Sigmoid colon (tissue), 7 donors: ENCODE measurements at regions of chr3 and their contacts with region 1.

Region 1: GRCh38 chr3:52278510-52279069 is at the start of gene WDR82:
- DNase-seq: peak; percentile 99
- H3K4me3 ChIP-seq: peak within 1 kb of the TSS; percentile 61 to 89 (median 83)
- H3K27ac ChIP-seq: peak within 1 kb of the TSS; percentile 94 to 99 (median 96)
- H3K4me1 ChIP-seq: peaks cover 0 to 53% (median 51%) of the 10 kb centered on the region in 4 donors
- H3K27me3 ChIP-seq: no peaks in the 10 kb centered on the region
- CTCF ChIP-seq: peak in 3 of 4 experiments; percentile 26 to 51 (median 29)
- EP300 ChIP-seq: peak in 1 of 4 donors; percentile 44
- POLR2A ChIP-seq: peak; percentile 53 to 63
- total RNA-seq, gene WDR82: 44.4 to 54.9 (median 48.0) TPM

Region 2: DNA sequence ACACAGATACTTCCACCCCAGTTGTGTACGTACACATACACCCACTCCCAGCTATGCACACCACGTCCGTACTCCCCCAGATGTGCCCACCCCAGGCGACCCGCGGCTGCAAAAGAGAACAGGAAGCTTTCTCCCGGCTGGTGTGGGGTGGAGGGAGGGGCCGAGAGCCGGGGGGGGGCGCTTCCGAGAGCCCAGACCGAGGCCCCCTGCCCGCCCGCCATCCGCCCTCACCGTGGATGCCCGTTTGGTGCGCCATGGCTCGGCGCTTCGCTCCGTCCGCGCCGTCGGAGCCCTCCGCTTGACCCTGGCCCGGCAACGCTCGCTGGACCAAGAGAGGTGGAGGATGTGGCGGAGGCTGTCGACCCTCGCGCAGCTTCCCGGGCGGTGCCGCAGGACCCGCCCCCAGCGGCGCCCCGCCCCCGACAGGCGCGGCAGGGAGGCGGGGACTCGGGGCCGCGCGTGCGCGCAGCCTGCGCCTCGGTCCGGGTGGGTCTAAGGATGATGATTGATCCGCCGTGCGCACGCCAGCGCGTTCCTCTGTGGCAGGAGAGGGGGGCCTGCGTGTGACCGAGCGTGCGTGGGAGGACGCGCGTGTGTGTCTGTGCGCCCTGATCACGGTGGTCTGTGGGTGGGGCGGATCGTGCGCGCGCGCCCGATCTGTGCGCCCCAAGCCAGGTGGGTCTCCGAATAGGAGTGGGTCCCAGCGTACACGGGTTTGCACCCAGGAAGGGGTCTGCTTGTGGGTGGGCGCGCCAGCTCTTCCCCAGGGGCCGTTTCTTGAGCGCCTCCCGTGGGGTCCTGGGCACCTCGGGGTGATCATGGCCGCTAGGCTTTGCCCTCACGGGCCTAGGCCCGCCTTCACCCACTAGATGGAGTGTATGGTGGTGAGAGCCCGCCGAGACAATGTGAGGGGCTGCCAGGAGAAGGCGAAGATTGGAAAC is 39.6 kb before region 1 on chr3 and contains the start of gene TWF2:
- intact Hi-C with region 1: loop called (anchors 2 kb)
- DNase-seq: peak; percentile 89
- H3K4me3 ChIP-seq: peak within 1 kb of the TSS; percentile 78 to 95 (median 87)
- H3K27ac ChIP-seq: peak within 1 kb of the TSS; percentile 93 to 97 (median 94)
- H3K4me1 ChIP-seq: peaks cover 0 to 60% (median 53%) of the 10 kb centered on the region in 4 donors
- H3K27me3 ChIP-seq: no peaks in the 10 kb centered on the region
- CTCF ChIP-seq: peak in 3 of 4 experiments; percentile 20 to 55 (median 42)
- EP300 ChIP-seq: no peak
- POLR2A ChIP-seq: peak in 1 of 2 donors; percentile 45
- total RNA-seq, gene TWF2: 40.4 to 57.3 (median 50.8) TPM

Region 3: GRCh38 chr3:52685709-52686691 is 407.4 kb after region 1 on chr3 and contains the starts of genes GNL3 and PBRM1:
- intact Hi-C with region 1: loop called (anchors 10 kb)
- DNase-seq: peak; percentile 96
- H3K4me3 ChIP-seq: peak within 1 kb of the TSS; percentile 72 to 82 (median 76)
- H3K27ac ChIP-seq: peak within 1 kb of the TSS; percentile 90 to 98 (median 94)
- H3K4me1 ChIP-seq: peaks cover 0 to 44% (median 34%) of the 10 kb centered on the region in 4 donors
- H3K27me3 ChIP-seq: no peaks in the 10 kb centered on the region
- CTCF ChIP-seq: no peak
- EP300 ChIP-seq: peak in 1 of 4 donors; percentile 84
- POLR2A ChIP-seq: peak; percentile 39 to 60
- total RNA-seq, gene GNL3: 22.4 to 42.5 (median 36.2) TPM
- total RNA-seq, gene PBRM1: 82.8 to 94.2 (median 90.1) TPM